Mammary epithelial cell (primary cell): ENCODE measurements at regions of chr6 and their contacts with region 1.

Region 1: GRCh38 chr6:37922563-37922962 is 103.0 kb downstream of the ZFAND3 start:
- DNase-seq: peak; percentile 32
- H3K4me3 ChIP-seq: no peak overlapping the region
- H3K27ac ChIP-seq: no peak overlapping the region
- H3K4me1 ChIP-seq: peaks cover 16% of the 10 kb centered on the region
- H3K27me3 ChIP-seq: no peaks in the 10 kb centered on the region
- CTCF ChIP-seq: no peak

Region 2: GRCh38 chr6:37882724-37883413 is 39.7 kb before region 1 on chr6:
- CTCF ChIA-PET with region 1: no interaction called
- dilution Hi-C with region 1: no loop called
- in situ Hi-C with region 1: no loop called
- intact Hi-C with region 1: no loop called
- DNase-seq: peak; percentile 35
- H3K4me3 ChIP-seq: no peak overlapping the region
- H3K27ac ChIP-seq: no peak overlapping the region
- H3K4me1 ChIP-seq: peaks cover 7% of the 10 kb centered on the region
- H3K27me3 ChIP-seq: no peaks in the 10 kb centered on the region
- CTCF ChIP-seq: no peak

Region 3: DNA sequence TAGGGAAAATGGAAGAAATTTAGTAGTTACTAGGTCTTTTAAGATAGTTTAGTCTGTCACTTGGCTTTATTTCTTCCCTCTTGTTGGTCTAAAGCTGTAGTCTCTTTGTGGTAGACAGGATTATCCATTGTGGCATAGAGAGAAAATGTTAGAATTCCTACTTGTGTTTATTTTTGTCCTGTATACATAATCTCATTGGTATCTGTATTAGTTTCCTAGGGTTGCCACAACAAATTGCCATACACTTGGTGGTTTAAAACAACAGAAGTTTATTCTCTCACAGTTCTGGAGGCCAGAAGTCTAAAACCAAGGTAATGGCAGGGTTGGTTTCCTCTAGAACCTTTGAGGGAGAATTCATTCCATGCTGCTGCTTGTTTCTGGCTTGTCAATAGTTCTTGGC is 16.3 kb after region 1 on chr6:
- CTCF ChIA-PET with region 1: no interaction called
- dilution Hi-C with region 1: no loop called
- in situ Hi-C with region 1: no loop called
- intact Hi-C with region 1: loop called (anchors 2 kb)
- DNase-seq: no peak
- H3K4me3 ChIP-seq: no peak overlapping the region
- H3K27ac ChIP-seq: no peak overlapping the region
- H3K4me1 ChIP-seq: no peaks in the 10 kb centered on the region
- H3K27me3 ChIP-seq: no peaks in the 10 kb centered on the region
- CTCF ChIP-seq: no peak

Region 4: GRCh38 chr6:38047562-38047961 is 125.0 kb after region 1 on chr6:
- CTCF ChIA-PET with region 1: no interaction called
- dilution Hi-C with region 1: no loop called
- in situ Hi-C with region 1: no loop called
- intact Hi-C with region 1: no loop called
- DNase-seq: no peak
- H3K4me3 ChIP-seq: no peak overlapping the region
- H3K27ac ChIP-seq: no peak overlapping the region
- H3K4me1 ChIP-seq: peaks cover 20% of the 10 kb centered on the region
- H3K27me3 ChIP-seq: no peaks in the 10 kb centered on the region
- CTCF ChIP-seq: no peak